H1 (cell line): ENCODE measurements at regions of chr2 and their contacts with region 1.

Region 1: GRCh38 chr2:162123806-162124758 is 28.0 kb downstream of the GCG start:
- DNase-seq: no peak
- H3K4me3 ChIP-seq: no peak overlapping the region
- H3K27ac ChIP-seq: no peak overlapping the region
- H3K4me1 ChIP-seq: no peaks in the 10 kb centered on the region
- H3K27me3 ChIP-seq: no peaks in the 10 kb centered on the region
- CTCF ChIP-seq: peak in 2 of 3 experiments; percentile 11 to 52; a peak in 2 of 4 replicates
- EP300 ChIP-seq: no peak
- POLR2A ChIP-seq: no peak
- RAD21 ChIP-seq: peak in 1 of 2 experiments; percentile 72

Region 2: DNA sequence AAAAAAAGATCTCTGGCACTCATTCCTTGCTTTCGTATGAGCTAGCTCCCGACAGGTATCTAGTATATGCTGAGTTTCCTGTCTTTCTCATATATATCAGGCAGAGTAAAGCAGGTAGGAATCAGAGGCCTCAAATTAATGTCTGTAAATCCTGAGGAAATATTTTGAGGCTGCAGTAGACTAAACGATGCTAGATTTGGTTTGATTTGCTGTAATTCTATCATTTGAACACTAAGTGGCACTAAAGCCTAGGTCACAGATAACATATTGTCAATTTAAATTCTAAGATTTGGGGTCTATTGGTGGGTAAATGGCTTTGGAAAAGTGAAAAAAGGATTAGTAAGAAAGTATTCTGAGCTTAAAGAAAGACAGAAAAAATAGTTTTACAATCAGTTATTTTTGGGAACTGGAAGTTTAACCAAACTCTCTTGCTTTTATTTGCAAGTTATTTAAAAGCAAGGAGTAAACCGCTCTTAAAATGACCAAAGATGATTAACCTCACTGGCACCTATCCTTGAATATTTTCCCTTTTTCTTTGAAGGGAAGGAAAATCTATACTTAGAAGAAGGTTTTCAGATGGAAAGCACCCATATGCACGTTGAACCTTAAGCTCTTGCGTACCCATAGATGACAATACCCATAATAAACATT is 537.4 kb before region 1 on chr2:
- CTCF ChIA-PET with region 1: interaction called, 27 read pairs
- POLR2A ChIA-PET with region 1: no interaction called
- DNase-seq: no peak
- H3K4me3 ChIP-seq: no peak overlapping the region
- H3K27ac ChIP-seq: no peak overlapping the region
- H3K4me1 ChIP-seq: no peaks in the 10 kb centered on the region
- H3K27me3 ChIP-seq: no peaks in the 10 kb centered on the region
- CTCF ChIP-seq: peak in 2 of 3 experiments; percentile 47 to 68; a peak in 2 of 4 replicates
- EP300 ChIP-seq: no peak
- POLR2A ChIP-seq: no peak
- RAD21 ChIP-seq: peak; percentile 85 to 88

Region 3: GRCh38 chr2:161987311-161987710 is 136.8 kb before region 1 on chr2:
- CTCF ChIA-PET with region 1: interaction called, 14 read pairs
- POLR2A ChIA-PET with region 1: no interaction called
- DNase-seq: no peak
- H3K4me3 ChIP-seq: no peak overlapping the region
- H3K27ac ChIP-seq: no peak overlapping the region
- H3K4me1 ChIP-seq: no peaks in the 10 kb centered on the region
- H3K27me3 ChIP-seq: no peaks in the 10 kb centered on the region
- CTCF ChIP-seq: no peak
- EP300 ChIP-seq: no peak
- POLR2A ChIP-seq: no peak
- RAD21 ChIP-seq: no peak

Region 4: GRCh38 chr2:162002623-162003240 is 121.3 kb before region 1 on chr2:
- CTCF ChIA-PET with region 1: interaction called, 10 read pairs
- POLR2A ChIA-PET with region 1: no interaction called
- DNase-seq: no peak
- H3K4me3 ChIP-seq: peak overlapping the region in 2 of 4 experiments; percentile 6 to 8; a peak in 1 of 8 replicates
- H3K27ac ChIP-seq: 0 out of 2 replicates have a peak overlapping the region, but pooled peaks have one; percentile 38
- H3K4me1 ChIP-seq: peaks cover 5 to 18% (median 12%) of the 10 kb centered on the region in 4 experiments; a peak in 6 of 7 replicates
- H3K27me3 ChIP-seq: no peaks in the 10 kb centered on the region
- CTCF ChIP-seq: no peak
- EP300 ChIP-seq: no peak
- POLR2A ChIP-seq: no peak
- RAD21 ChIP-seq: no peak

Region 5: DNA sequence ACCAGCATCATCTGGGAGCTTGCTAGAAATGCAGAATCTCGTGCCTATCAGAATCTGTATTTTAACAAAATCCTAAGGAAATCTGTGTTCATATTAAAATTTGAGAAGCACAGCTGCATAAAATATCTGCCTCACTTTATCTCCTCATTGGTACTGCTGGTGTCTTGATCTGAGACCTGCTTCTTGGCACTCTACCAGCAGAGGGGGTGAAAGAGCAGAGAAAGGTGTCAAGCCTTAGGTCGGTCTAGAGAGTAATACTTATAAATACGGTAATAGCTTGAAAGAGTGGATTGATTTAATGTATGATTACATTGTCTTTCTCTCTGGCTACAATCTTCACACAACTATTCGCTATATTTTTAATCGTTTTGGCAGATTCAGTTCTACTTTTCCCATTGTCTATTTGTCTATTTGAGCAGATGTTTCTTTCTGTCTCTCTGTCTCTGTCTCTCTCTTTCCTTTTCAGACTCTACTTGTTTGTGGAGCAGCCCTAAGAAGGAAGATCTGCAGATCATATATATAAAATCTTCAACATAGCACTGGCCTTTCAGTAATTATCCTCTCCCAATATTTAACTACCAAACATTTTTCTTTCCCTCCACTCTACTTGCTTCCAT is 29.6 kb after region 1 on chr2:
- CTCF ChIA-PET with region 1: interaction called, 15 read pairs
- POLR2A ChIA-PET with region 1: no interaction called
- DNase-seq: peak; percentile 27 to 72
- H3K4me3 ChIP-seq: no peak overlapping the region
- H3K27ac ChIP-seq: no peak overlapping the region
- H3K4me1 ChIP-seq: peaks cover 0 to 3% (median 0%) of the 10 kb centered on the region in 4 experiments; a peak in 1 of 7 replicates
- H3K27me3 ChIP-seq: no peaks in the 10 kb centered on the region
- CTCF ChIP-seq: peak; percentile 11 to 80 (median 74)
- EP300 ChIP-seq: no peak
- POLR2A ChIP-seq: no peak
- RAD21 ChIP-seq: peak; percentile 74 to 81